ENCODE measurements at regions of chr1 and their contacts with region 1.

Region 1: DNA sequence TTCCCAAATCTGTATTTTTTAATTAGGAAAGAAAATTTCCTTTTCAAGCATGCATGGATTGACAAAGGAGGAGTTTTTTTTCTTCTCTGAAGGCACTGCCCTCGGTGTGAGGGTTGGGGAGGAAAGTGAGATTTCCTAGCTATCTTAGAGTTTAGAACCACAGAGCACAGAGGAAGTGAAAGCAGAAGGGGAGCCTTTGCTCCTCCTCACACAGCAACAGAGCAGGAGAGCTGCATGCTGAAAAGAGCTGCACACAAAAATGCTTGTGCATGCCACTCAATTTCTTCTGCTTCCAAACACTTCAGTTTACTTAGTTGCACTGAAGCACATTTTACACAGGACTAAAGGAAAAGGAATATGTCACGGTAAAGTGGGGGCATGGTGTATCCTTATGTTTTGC is 308.1 kb downstream of the GPATCH2 start:
- DNase-seq: peak; percentile 28
- ATAC-seq: peak; percentile 99
- H3K4me3 ChIP-seq: no peak overlapping the region
- H3K27ac ChIP-seq: no peak overlapping the region
- H3K4me1 ChIP-seq: peaks cover 11% of the 10 kb centered on the region
- H3K27me3 ChIP-seq: no peaks in the 10 kb centered on the region
- CTCF ChIP-seq: no peak
- EP300 ChIP-seq: peak in 1 of 2 experiments; percentile 39; a peak in 1 of 4 replicates
- POLR2A ChIP-seq: no peak
- RAD21 ChIP-seq: no peak

Region 2: DNA sequence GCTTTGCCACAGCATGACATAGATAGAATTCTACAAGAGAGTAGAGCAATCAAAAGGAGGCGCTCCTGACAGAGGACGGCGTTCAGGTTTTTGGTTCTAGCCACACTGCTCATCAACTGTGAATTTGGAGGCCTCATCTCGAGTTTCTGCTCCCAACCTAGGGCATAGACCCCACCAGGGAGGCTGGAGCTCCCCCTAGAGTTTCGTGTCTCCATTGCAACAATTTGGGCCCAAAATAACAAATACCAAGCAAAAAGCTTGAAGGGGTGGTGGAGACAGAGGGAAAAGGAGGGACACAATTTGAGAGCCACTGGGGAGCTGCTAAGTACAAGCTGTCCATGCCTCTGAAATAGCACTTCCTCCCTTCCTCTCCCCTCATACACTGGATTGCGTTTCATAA is 11.1 kb after region 1 on chr1:
- CTCF ChIA-PET with region 1: interaction called, 10 read pairs
- POLR2A ChIA-PET with region 1: no interaction called
- RAD21 ChIA-PET with region 1: interaction called, 3 read pairs
- SMC1A ChIA-PET with region 1: interaction called, 3 read pairs
- in situ Hi-C with region 1: no loop called
- intact Hi-C with region 1: no loop called
- DNase-seq: no peak
- ATAC-seq: peak; percentile 81
- H3K4me3 ChIP-seq: no peak overlapping the region
- H3K27ac ChIP-seq: no peak overlapping the region
- H3K4me1 ChIP-seq: no peaks in the 10 kb centered on the region
- H3K27me3 ChIP-seq: peaks cover 0 to 3% of the 10 kb centered on the region in 2 experiments; a peak in 2 of 4 replicates
- CTCF ChIP-seq: peak; percentile 64 to 68 (median 65)
- EP300 ChIP-seq: no peak
- POLR2A ChIP-seq: no peak
- RAD21 ChIP-seq: peak; percentile 81

Measured in GM12878 (cell line).